T-cell (primary cell): ENCODE measurements at regions of chrX and their contacts with region 1.

Region 1: DNA sequence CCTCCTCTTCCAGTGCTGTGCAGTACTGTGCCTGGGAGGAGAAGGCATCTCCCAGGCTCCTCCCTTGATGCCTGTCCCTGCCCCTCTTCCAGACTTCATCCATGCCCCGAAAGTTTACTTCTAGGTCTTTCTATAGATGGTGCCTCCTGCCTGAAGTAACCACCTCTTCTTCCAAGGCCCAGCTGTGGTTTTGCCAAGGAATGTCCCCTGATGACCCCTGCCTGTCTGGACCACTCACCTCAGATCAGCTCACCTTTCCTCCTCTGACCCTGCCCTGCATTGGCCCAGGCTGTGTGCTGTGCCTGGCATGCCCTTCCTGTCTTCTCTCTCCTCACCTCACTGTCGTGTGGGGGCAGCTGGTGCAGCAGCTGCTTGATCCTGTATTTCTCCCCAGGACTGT is 6.8 kb downstream of the PRICKLE3 start:
- DNase-seq: no peak
- ATAC-seq: no peak
- H3K4me3 ChIP-seq: no peak overlapping the region
- H3K4me3 Mint-ChIP-seq: no peak overlapping the region
- H3K27ac ChIP-seq: no peak overlapping the region
- H3K27ac Mint-ChIP-seq: no peak overlapping the region
- H3K4me1 ChIP-seq: peaks cover 0 to 5% of the 10 kb centered on the region in 2 experiments
- H3K4me1 Mint-ChIP-seq: peaks cover 0 to 18% (median 11%) of the 10 kb centered on the region in 3 donors
- H3K27me3 ChIP-seq: no peaks in the 10 kb centered on the region
- H3K27me3 Mint-ChIP-seq: no peaks in the 10 kb centered on the region

Region 2: DNA sequence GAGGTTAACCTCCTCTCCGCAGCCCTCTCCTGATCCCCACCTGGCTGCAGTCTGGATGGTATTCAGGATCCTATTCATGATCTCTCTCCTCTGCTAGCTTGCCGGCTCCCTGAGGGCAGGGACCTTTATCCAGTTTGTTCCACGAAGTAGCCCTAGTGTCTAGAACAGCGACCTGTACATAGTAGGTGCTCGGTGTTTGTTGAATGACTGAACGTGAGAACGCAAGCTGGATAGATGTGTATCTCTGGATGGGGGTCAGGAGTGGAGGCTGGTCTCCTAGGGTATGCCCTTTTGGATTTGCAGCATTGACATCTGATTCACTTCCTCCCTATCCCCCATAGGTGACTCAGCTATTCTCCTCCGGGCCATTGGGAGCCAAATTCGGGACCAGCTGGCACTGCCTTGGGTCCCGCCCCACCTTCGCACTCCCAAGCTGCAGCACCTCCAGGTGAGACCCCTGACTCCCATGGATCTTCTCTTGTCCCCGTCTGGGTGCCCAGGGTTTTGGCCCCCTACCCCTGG is 63.2 kb after region 1 on chrX:
- CTCF ChIA-PET with region 1: no interaction called
- POLR2A ChIA-PET with region 1: no interaction called
- DNase-seq: no peak
- ATAC-seq: no peak
- H3K4me3 ChIP-seq: no peak overlapping the region
- H3K4me3 Mint-ChIP-seq: no peak overlapping the region
- H3K27ac ChIP-seq: no peak overlapping the region
- H3K27ac Mint-ChIP-seq: no peak overlapping the region
- H3K4me1 ChIP-seq: peaks cover 0 to 8% of the 10 kb centered on the region in 2 experiments
- H3K4me1 Mint-ChIP-seq: peaks cover 0 to 16% (median 15%) of the 10 kb centered on the region in 3 donors
- H3K27me3 ChIP-seq: no peaks in the 10 kb centered on the region
- H3K27me3 Mint-ChIP-seq: no peaks in the 10 kb centered on the region

Region 3: GRCh38 chrX:49618574-49618973 is 439.2 kb after region 1 on chrX:
- CTCF ChIA-PET with region 1: no interaction called
- POLR2A ChIA-PET with region 1: interaction called in 1 of 2 experiments, 17 read pairs
- DNase-seq: no peak
- ATAC-seq: no peak
- H3K4me3 ChIP-seq: no peak overlapping the region
- H3K4me3 Mint-ChIP-seq: no peak overlapping the region
- H3K27ac ChIP-seq: no peak overlapping the region
- H3K27ac Mint-ChIP-seq: no peak overlapping the region
- H3K4me1 ChIP-seq: no peaks in the 10 kb centered on the region
- H3K4me1 Mint-ChIP-seq: no peaks in the 10 kb centered on the region
- H3K27me3 ChIP-seq: no peaks in the 10 kb centered on the region
- H3K27me3 Mint-ChIP-seq: peaks cover 1 to 7% of the 10 kb centered on the region in 2 donors